Caco-2 (cell line): ENCODE measurements at regions of chr10 and their contacts with region 1.

Region 1: GRCh38 chr10:126504063-126504739 is 115.9 kb upstream of the ADAM12 start:
- DNase-seq: peak; percentile 45 to 71
- H3K4me3 ChIP-seq: no peak overlapping the region
- H3K4me3 Mint-ChIP-seq: no peak overlapping the region
- H3K27ac Mint-ChIP-seq: no peak overlapping the region
- H3K4me1 ChIP-seq: no peaks in the 10 kb centered on the region
- H3K4me1 Mint-ChIP-seq: no peaks in the 10 kb centered on the region
- H3K27me3 ChIP-seq: no peaks in the 10 kb centered on the region
- H3K27me3 Mint-ChIP-seq: peaks cover 13% of the 10 kb centered on the region
- CTCF ChIP-seq: peak; percentile 71 to 78

Region 2: GRCh38 chr10:125868372-125868975 is 635.7 kb before region 1 on chr10:
- CTCF ChIA-PET with region 1: interaction called, 3 read pairs
- POLR2A ChIA-PET with region 1: no interaction called
- intact Hi-C with region 1: loop called (anchors 5 kb)
- DNase-seq: peak in 1 of 2 experiments; percentile 56
- H3K4me3 ChIP-seq: no peak overlapping the region
- H3K4me3 Mint-ChIP-seq: no peak overlapping the region
- H3K27ac Mint-ChIP-seq: no peak overlapping the region
- H3K4me1 ChIP-seq: no peaks in the 10 kb centered on the region
- H3K4me1 Mint-ChIP-seq: peaks cover 6% of the 10 kb centered on the region
- H3K27me3 ChIP-seq: no peaks in the 10 kb centered on the region
- H3K27me3 Mint-ChIP-seq: no peaks in the 10 kb centered on the region
- CTCF ChIP-seq: peak; percentile 79 to 83

Region 3: DNA sequence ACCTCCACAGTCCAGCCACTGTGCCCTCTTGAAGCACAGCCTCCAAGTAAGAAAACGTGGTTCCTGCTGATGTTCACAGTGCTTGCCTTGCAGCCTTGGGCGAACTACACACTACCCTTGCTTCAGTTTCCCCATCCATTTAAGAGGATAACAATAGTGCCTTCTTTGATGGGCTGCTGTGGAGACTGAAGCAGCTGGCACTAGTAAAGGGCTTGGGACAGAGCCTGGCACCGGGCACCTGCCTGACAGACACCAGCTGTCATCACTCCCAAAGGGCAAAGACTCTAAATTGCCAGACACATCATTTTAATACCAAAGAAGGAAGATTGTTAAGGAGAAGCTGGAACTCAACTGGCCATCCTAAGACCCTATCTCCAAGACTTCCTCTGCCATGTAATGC is 169.4 kb after region 1 on chr10:
- CTCF ChIA-PET with region 1: no interaction called
- POLR2A ChIA-PET with region 1: no interaction called
- intact Hi-C with region 1: no loop called
- DNase-seq: no peak
- H3K4me3 ChIP-seq: no peak overlapping the region
- H3K4me3 Mint-ChIP-seq: no peak overlapping the region
- H3K27ac Mint-ChIP-seq: no peak overlapping the region
- H3K4me1 ChIP-seq: no peaks in the 10 kb centered on the region
- H3K4me1 Mint-ChIP-seq: no peaks in the 10 kb centered on the region
- H3K27me3 ChIP-seq: no peaks in the 10 kb centered on the region
- H3K27me3 Mint-ChIP-seq: peaks cover 8% of the 10 kb centered on the region
- CTCF ChIP-seq: no peak